GM12878 (cell line): ENCODE measurements at regions of chr12 and their contacts with region 1.

Region 1: GRCh38 chr12:64403707-64404469 is at the start of gene XPOT:
- DNase-seq: peak; percentile 84
- ATAC-seq: peak; percentile 95
- H3K4me3 ChIP-seq: peak within 1 kb of the TSS; percentile 85
- H3K27ac ChIP-seq: peak within 1 kb of the TSS; percentile 93
- H3K4me1 ChIP-seq: peaks cover 4% of the 10 kb centered on the region
- H3K27me3 ChIP-seq: no peaks in the 10 kb centered on the region
- CTCF ChIP-seq: 0 out of 6 replicates have a peak, but pooled peaks of 1 of the 3 experiments have one; percentile 0
- EP300 ChIP-seq: no peak
- POLR2A ChIP-seq: peak; percentile 87
- RAD21 ChIP-seq: no peak
- polyA plus RNA-seq, gene XPOT: 11.9 to 14.8 TPM

Region 2: GRCh38 chr12:64222009-64222765 is 181.7 kb before region 1 on chr12 and contains the start of gene KICS2:
- CTCF ChIA-PET with region 1: no interaction called
- POLR2A ChIA-PET with region 1: no interaction called
- RAD21 ChIA-PET with region 1: no interaction called
- SMC1A ChIA-PET with region 1: no interaction called
- in situ Hi-C with region 1: no loop called
- intact Hi-C with region 1: loop called (anchors 5 kb)
- DNase-seq: peak; percentile 69
- ATAC-seq: peak; percentile 92
- H3K4me3 ChIP-seq: peak within 1 kb of the TSS; percentile 87
- H3K27ac ChIP-seq: peak within 1 kb of the TSS; percentile 64
- H3K4me1 ChIP-seq: no peaks in the 10 kb centered on the region; the same call in 1 of the 2 replicates
- H3K27me3 ChIP-seq: no peaks in the 10 kb centered on the region
- CTCF ChIP-seq: no peak
- EP300 ChIP-seq: no peak
- POLR2A ChIP-seq: peak; percentile 99
- RAD21 ChIP-seq: no peak
- polyA plus RNA-seq, gene KICS2: 3.9 to 4.4 TPM

Region 3: GRCh38 chr12:64445490-64445889 is 41.6 kb after region 1 on chr12:
- CTCF ChIA-PET with region 1: interaction called, 3 read pairs
- POLR2A ChIA-PET with region 1: no interaction called
- RAD21 ChIA-PET with region 1: interaction called, 4 read pairs
- SMC1A ChIA-PET with region 1: interaction called, 4 read pairs
- in situ Hi-C with region 1: loop called (anchors 5 kb)
- intact Hi-C with region 1: no loop called
- DNase-seq: no peak
- ATAC-seq: no peak
- H3K4me3 ChIP-seq: no peak overlapping the region
- H3K27ac ChIP-seq: no peak overlapping the region
- H3K4me1 ChIP-seq: no peaks in the 10 kb centered on the region
- H3K27me3 ChIP-seq: no peaks in the 10 kb centered on the region
- CTCF ChIP-seq: no peak
- EP300 ChIP-seq: no peak
- POLR2A ChIP-seq: no peak
- RAD21 ChIP-seq: no peak

Region 4: DNA sequence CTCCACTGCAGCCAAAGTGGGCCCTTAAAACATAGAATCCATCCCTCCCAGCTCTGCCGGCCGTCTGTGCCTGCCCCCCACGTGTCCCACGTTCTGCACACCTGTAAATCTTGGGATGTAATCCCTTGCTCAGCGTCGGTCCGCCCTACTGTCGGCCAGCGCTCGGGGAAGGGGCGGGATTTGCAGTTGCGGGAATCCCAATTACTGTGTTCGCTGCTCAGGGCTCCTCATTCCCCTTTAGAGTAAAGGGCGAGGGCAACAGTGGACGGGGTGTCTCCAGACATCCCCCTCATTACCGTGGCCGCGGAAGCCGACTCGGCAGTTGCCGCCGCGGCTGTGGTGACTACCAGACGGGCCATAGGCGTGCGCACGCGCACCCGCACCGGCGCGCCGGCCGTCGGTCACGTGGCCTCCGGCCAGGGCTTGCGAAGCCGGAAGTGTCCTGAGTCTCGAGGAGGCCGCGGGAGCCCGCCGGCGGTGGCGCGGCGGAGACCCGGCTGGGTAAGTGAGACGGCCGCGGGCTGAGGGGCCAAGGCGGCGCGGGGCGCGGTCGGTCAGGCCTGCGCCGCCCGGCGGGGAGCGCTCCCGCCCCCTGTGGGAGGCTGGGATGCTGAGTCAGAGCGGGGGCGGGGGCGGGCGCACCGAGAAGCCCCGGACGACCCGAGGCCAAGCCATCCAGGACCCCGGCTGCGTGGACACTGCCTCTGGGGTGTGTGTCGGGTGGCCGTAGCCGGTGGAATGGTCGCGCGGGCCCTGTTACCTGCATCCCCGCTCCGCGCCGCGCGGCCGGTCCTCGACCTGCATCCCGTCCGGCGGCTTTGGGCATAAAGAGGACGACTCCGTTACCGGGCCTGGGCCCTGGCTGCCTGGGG is 48.0 kb after region 1 on chr12 and contains the start of gene TBK1:
- CTCF ChIA-PET with region 1: interaction called, 3 read pairs
- POLR2A ChIA-PET with region 1: no interaction called
- RAD21 ChIA-PET with region 1: interaction called, 4 read pairs
- SMC1A ChIA-PET with region 1: interaction called, 4 read pairs
- in situ Hi-C with region 1: loop called (anchors 5 kb)
- intact Hi-C with region 1: loop called (anchors 1 kb)
- DNase-seq: peak; percentile 53
- ATAC-seq: peak; percentile 92
- H3K4me3 ChIP-seq: peak within 1 kb of the TSS; percentile 97
- H3K27ac ChIP-seq: peak within 1 kb of the TSS; percentile 88
- H3K4me1 ChIP-seq: peaks cover 1% of the 10 kb centered on the region; the same call in 1 of the 2 replicates
- H3K27me3 ChIP-seq: no peaks in the 10 kb centered on the region
- CTCF ChIP-seq: no peak
- EP300 ChIP-seq: no peak
- POLR2A ChIP-seq: peak; percentile 83
- RAD21 ChIP-seq: no peak
- polyA plus RNA-seq, gene TBK1: 13.4 to 18.0 TPM

Region 5: GRCh38 chr12:65015850-65016249 is 612.0 kb after region 1 on chr12:
- CTCF ChIA-PET with region 1: no interaction called
- POLR2A ChIA-PET with region 1: no interaction called
- RAD21 ChIA-PET with region 1: no interaction called
- SMC1A ChIA-PET with region 1: no interaction called
- in situ Hi-C with region 1: no loop called
- intact Hi-C with region 1: no loop called
- DNase-seq: no peak
- ATAC-seq: no peak
- H3K4me3 ChIP-seq: no peak overlapping the region
- H3K27ac ChIP-seq: no peak overlapping the region
- H3K4me1 ChIP-seq: no peaks in the 10 kb centered on the region
- H3K27me3 ChIP-seq: peaks cover 0 to 2% of the 10 kb centered on the region in 2 experiments; a peak in 1 of 4 replicates
- CTCF ChIP-seq: no peak
- EP300 ChIP-seq: no peak
- POLR2A ChIP-seq: no peak
- RAD21 ChIP-seq: no peak